Sigmoid colon (tissue), 7 donors: ENCODE measurements at regions of chr21 and their contacts with region 1.

Region 1: DNA sequence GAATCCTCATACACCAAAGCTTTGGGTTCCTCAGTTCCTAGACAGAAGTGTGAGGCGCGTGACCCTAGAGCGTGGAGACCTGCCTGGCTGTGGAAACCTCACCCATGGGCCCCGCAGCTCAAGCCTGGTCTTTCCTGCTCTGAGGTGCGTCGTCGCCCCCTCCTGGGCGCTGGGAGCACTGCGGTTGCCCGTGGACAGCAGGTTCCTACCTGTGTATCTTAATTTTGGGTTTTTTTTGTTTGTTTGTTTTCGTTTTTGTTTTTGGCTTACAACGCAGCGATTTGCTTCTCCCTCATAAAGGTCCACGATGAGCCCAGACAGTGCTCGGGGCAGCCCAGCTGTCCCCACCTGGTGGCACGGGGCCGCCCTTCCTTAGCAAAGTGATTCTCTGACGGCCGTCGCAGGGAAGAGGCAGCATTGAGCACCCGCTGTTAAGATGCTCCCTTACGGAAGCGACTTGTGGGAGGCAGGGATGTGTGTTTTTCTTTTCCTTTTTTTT is 36.6 kb upstream of the TRAPPC10 start:
- DNase-seq: peak; percentile 87
- H3K4me3 ChIP-seq: no peak overlapping the region
- H3K27ac ChIP-seq: no peak overlapping the region
- H3K4me1 ChIP-seq: peaks cover 0 to 7% (median 3%) of the 10 kb centered on the region in 4 donors
- H3K27me3 ChIP-seq: no peaks in the 10 kb centered on the region
- CTCF ChIP-seq: peak; percentile 84 to 96 (median 91)
- EP300 ChIP-seq: no peak
- POLR2A ChIP-seq: no peak

Region 2: DNA sequence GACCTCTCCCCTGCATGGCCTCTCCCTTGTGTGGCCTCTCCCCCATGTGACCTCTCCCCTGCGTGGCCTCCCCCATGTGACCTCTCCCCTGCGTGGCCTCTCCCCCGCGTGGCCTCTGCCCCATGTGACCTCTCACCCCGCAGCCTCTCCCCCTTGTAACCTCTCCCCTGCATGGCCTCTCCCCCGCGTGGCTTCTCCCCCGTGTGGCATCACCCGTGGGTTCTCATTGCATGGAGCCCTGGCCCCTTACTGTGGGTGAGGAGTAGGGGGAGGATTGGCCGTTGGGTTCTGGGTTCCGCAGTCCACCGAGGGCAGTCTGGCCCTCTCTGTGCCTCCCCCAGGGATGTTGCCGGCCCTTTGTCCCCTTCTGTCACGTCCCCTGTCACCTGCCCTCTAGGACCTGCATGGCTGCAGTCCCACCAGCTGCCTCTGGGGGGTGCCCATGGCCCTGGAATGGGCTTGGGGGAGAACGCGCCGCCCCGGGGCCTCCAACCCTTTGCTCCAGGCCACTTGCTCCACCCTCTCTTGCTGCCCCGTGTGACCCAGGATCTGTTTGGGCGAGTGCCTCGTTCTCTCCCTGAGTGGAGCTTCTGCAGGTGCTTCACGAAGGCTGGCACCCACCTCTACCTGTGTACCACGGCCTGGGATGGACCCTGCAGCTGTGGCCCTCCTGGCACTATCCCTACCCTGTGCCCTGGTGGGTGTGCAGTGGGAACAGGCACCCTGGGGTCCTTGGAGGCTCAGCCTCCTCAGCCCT is 164.9 kb before region 1 on chr21:
- intact Hi-C with region 1: loop called (anchors 1 kb)
- DNase-seq: peak; percentile 86
- H3K4me3 ChIP-seq: no peak overlapping the region
- H3K27ac ChIP-seq: no peak overlapping the region
- H3K4me1 ChIP-seq: peaks cover 0 to 10% (median 9%) of the 10 kb centered on the region in 4 donors
- H3K27me3 ChIP-seq: peaks cover 0 to 6% (median 0%) of the 10 kb centered on the region in 3 donors
- CTCF ChIP-seq: peak; percentile 94 to 97 (median 96)
- EP300 ChIP-seq: no peak
- POLR2A ChIP-seq: no peak

Region 3: DNA sequence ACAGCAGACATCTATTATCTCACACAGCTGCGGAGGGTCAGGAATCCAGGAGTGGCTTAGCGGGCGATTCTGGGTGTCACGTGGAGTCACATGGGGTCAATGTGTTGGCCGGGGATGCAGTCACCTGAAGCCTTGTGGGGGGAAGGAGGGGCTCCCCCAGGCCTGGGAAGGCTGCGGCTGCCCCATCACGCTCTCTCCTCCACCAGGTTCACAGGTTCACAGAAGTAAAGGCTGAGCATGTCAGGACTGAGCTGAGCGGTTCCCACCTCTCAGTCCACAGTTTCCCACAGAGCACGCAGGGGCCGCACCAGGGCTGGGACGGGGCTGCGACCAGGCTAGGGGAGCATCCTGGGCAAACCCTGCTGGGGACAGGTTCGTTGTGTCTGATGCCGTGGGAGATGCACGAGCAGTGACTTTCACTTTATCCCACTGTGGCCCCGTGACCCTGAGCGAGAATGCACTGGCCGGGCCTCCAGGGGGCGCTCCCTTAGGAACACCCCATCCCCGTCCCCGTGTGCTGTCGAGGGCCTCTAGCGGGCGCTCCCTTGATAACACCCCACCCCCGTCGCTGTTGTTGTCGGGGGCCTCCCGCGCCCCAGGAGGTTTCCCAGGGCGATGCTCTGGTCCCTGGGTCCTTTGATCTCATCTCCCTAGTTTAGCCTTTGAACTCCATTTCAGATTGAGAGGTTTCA is 36.6 kb before region 1 on chr21:
- intact Hi-C with region 1: loop called (anchors 5 kb)
- DNase-seq: peak; percentile 87
- H3K4me3 ChIP-seq: peak overlapping the region in 3 of 4 donors; percentile 31 to 39 (median 39)
- H3K27ac ChIP-seq: peak overlapping the region in 3 of 4 donors; percentile 50 to 58 (median 57)
- H3K4me1 ChIP-seq: peaks cover 0 to 34% (median 24%) of the 10 kb centered on the region in 4 donors
- H3K27me3 ChIP-seq: no peaks in the 10 kb centered on the region
- CTCF ChIP-seq: peak; percentile 79 to 86 (median 86)
- EP300 ChIP-seq: no peak
- POLR2A ChIP-seq: no peak

Region 4: GRCh38 chr21:44199465-44199864 is 223.9 kb after region 1 on chr21:
- intact Hi-C with region 1: no loop called
- DNase-seq: no peak
- H3K4me3 ChIP-seq: no peak overlapping the region
- H3K27ac ChIP-seq: no peak overlapping the region
- H3K4me1 ChIP-seq: no peaks in the 10 kb centered on the region
- H3K27me3 ChIP-seq: no peaks in the 10 kb centered on the region
- CTCF ChIP-seq: no peak
- EP300 ChIP-seq: no peak
- POLR2A ChIP-seq: no peak